ENCODE measurements at regions of chr4 and their contacts with region 1.

Region 1: DNA sequence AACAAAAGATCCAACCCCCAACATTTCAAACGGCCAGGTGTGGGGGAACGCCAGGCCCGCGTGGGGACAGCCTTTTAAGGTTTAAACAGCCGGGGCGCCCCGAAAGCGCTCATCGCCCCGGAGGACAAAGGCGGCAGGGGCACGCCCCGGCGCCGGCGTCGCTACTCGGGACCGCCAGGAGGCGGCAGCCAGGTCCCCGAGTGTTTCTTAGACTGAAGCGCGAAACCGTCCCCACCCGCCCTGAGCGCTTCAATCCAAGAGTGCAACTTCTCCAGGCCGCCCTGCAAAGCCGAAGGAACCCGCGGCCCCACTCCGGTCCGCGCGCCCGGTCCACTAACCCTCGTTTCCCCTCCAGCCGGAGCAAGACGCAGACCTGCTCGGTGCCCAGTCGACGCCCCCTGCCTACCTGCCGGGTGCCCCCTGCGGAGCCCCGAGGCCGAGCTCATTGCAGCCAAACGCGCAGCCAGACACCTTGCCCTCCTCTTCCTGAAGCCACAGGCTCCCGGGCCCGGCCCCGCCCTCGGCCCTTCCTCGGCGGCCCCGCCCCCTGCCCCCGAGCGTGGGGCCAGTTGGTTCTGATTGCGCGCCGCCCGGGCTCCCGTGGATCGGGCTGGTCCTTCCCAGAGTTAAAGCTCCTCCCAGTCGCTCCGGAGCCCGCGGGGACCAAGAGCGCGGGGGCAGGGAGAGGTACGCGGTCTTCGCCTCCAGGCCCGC is at the start of gene CASP6:
- DNase-seq: peak; percentile 84
- ATAC-seq: peak; percentile 90
- H3K4me3 Mint-ChIP-seq: peak within 1 kb of the TSS; percentile 96
- H3K27ac Mint-ChIP-seq: peak within 1 kb of the TSS; percentile 95
- H3K4me1 Mint-ChIP-seq: peaks cover 26% of the 10 kb centered on the region
- H3K27me3 Mint-ChIP-seq: no peaks in the 10 kb centered on the region
- total RNA-seq, gene CASP6: 25.5 to 35.5 TPM

Region 2: GRCh38 chr4:109690690-109691410 is 12.3 kb before region 1 on chr4:
- POLR2A ChIA-PET with region 1: interaction called, 25 read pairs
- DNase-seq: no peak
- ATAC-seq: peak; percentile 90
- H3K4me3 Mint-ChIP-seq: peak overlapping the region; percentile 32
- H3K27ac Mint-ChIP-seq: peak overlapping the region; percentile 81
- H3K4me1 Mint-ChIP-seq: peaks cover 24% of the 10 kb centered on the region
- H3K27me3 Mint-ChIP-seq: no peaks in the 10 kb centered on the region

Region 3: DNA sequence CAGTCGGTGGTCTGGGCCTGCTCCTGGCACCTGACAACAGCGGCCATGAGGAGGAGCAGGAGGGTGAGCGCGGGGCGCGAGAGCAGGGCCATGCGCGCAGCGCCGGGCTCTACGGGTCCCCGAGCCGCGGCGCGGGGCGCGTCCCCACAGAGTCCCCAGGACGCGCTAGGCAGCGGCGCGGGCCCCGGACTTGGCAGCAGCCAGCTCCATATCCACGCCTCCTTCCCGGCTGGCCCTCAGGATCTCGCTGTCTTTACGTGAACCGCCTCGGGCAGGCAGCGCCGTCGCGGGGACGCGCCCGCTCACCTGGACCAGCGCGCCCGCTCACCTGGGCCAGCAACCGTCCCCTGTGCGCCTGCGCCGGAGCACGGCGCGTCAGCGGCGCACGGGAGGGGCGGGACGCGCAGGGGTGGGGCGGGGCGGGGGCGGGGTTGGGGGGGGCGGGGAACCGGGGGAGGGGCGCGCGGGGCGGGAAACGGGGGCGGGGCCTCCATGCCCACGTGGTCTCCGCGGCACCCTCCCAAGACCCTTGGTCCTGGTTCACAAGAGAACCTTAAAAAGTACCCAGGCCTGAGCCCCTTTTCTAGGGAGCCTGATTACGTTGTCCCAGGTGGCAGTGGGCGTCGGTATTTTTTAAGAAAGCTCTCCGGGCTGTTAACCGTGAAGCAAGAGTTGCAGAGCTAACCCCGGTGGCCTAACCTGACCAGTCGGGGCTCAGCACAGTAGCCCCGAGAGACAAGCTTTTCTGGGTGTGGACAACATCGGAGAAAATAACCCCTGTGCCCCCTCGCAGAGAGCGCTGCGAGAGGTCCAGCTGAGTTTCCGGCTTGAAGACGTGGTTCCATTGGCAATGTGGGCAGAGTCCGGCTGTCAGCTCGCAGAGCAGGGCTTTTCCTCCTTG is 26.9 kb after region 1 on chr4 and contains the start of gene PLA2G12A:
- POLR2A ChIA-PET with region 1: interaction called, 11 read pairs
- DNase-seq: peak; percentile 87
- ATAC-seq: peak; percentile 88
- H3K4me3 Mint-ChIP-seq: peak within 1 kb of the TSS; percentile 92
- H3K27ac Mint-ChIP-seq: peak within 1 kb of the TSS; percentile 83
- H3K4me1 Mint-ChIP-seq: peaks cover 21% of the 10 kb centered on the region
- H3K27me3 Mint-ChIP-seq: no peaks in the 10 kb centered on the region
- total RNA-seq, gene PLA2G12A: 15.7 to 16.4 TPM

Measured in activated naive CD8-positive, alpha-beta T cell treated with anti-CD3 and anti-CD28 coated beads, Interleukin-2, amount 10 ng/mL, durations not matched to agents 7 days and 5 days (primary cell).